ENCODE measurements at regions of chr15 and their contacts with region 1.

Region 1: GRCh38 chr15:85296615-85297402 is 83.6 kb upstream of the AKAP13 start:
- DNase-seq: peak in 1 of 2 donors; percentile 53
- ATAC-seq: peak; percentile 91
- H3K4me3 ChIP-seq: peak overlapping the region in 1 of 2 donors; percentile 52
- H3K27ac ChIP-seq: no peak overlapping the region
- H3K4me1 ChIP-seq: no peaks in the 10 kb centered on the region
- H3K27me3 ChIP-seq: no peaks in the 10 kb centered on the region

Region 2: DNA sequence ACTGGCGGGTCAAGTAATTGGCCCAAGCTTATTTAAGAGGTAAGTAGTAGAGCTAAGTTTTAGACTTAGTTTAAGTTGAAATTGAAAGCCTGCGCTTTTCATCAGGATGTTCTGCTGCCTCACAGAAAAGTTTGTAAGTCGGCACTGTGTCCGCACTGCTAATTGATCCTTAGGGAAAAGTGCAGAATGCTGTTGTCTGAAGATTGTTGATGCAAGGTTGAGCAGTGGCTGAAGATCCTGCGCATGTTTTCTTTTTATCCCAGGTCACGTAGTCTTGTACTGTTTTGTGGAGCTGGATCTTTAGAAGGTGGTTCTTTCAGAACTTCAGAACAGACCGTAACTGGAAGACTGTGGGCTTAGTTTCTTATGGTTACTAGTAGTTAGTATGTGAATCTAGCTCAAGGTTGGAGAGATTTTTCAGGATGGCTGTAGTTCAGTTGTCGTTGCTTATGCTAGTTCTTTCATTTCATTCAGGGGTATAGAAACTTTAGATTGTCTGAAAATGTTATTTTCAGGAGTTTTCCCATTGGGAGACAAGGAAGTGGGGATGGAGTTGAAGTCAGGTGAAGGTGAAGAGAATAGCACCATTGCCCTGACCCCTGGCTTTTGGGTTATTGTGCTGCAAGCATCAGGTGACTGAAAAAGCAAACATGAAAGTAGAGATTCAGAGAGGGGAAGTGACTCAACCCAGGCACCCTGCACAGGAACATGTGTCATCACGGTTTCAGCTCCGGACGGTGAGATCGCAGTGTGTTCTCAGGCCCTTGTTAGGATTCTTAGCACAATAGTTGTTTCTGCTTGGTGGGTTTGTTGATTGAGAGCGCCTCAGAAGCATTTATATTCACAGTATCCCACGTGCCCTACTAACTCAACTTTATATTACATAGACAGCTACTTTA is 116.4 kb after region 1 on chr15:
- intact Hi-C with region 1: loop called (anchors 10 kb)
- DNase-seq: peak in 1 of 2 donors; percentile 70
- ATAC-seq: peak; percentile 72
- H3K4me3 ChIP-seq: no peak overlapping the region
- H3K27ac ChIP-seq: no peak overlapping the region
- H3K4me1 ChIP-seq: no peaks in the 10 kb centered on the region
- H3K27me3 ChIP-seq: peaks cover 0 to 1% of the 10 kb centered on the region in 2 donors

Measured in aorta (tissue), 5 donors.